CD8-positive, alpha-beta memory T cell (primary cell): ENCODE measurements at regions of chr5 and their contacts with region 1.

Region 1: GRCh38 chr5:138575194-138576015 is at the start of gene HSPA9:
- DNase-seq: peak; percentile 93 to 98 (median 98)
- H3K4me3 ChIP-seq: peak within 1 kb of the TSS; percentile 97
- H3K4me3 Mint-ChIP-seq: peak within 1 kb of the TSS; percentile 86 to 98 (median 98)
- H3K27ac ChIP-seq: peak within 1 kb of the TSS; percentile 100
- H3K27ac Mint-ChIP-seq: peak within 1 kb of the TSS; percentile 100
- H3K4me1 ChIP-seq: peaks cover 29% of the 10 kb centered on the region
- H3K4me1 Mint-ChIP-seq: peaks cover 28 to 50% (median 34%) of the 10 kb centered on the region in 3 donors
- H3K27me3 ChIP-seq: no peaks in the 10 kb centered on the region
- H3K27me3 Mint-ChIP-seq: peaks cover 0 to 5% of the 10 kb centered on the region in 2 donors
- total RNA-seq, gene HSPA9: 468 to 498 TPM

Region 2: GRCh38 chr5:138528208-138528607 is 47.2 kb before region 1 on chr5:
- CTCF ChIA-PET with region 1: no interaction called
- POLR2A ChIA-PET with region 1: no interaction called
- DNase-seq: no peak
- H3K4me3 ChIP-seq: no peak overlapping the region
- H3K4me3 Mint-ChIP-seq: no peak overlapping the region
- H3K27ac ChIP-seq: no peak overlapping the region
- H3K27ac Mint-ChIP-seq: no peak overlapping the region
- H3K4me1 ChIP-seq: peaks cover 5% of the 10 kb centered on the region
- H3K4me1 Mint-ChIP-seq: peaks cover 39 to 66% (median 62%) of the 10 kb centered on the region in 3 donors
- H3K27me3 ChIP-seq: no peaks in the 10 kb centered on the region
- H3K27me3 Mint-ChIP-seq: no peaks in the 10 kb centered on the region

Region 3: GRCh38 chr5:138542956-138543729 is 32.3 kb before region 1 on chr5 and contains the start of gene ETF1:
- CTCF ChIA-PET with region 1: interaction called, 26 read pairs
- POLR2A ChIA-PET with region 1: interaction called, 60 read pairs
- DNase-seq: peak; percentile 99 to 100 (median 100)
- H3K4me3 ChIP-seq: peak within 1 kb of the TSS; percentile 89
- H3K4me3 Mint-ChIP-seq: peak within 1 kb of the TSS; percentile 96 to 100 (median 98)
- H3K27ac ChIP-seq: peak within 1 kb of the TSS; percentile 99
- H3K27ac Mint-ChIP-seq: peak within 1 kb of the TSS; percentile 99 to 100 (median 100)
- H3K4me1 ChIP-seq: peaks cover 75% of the 10 kb centered on the region
- H3K4me1 Mint-ChIP-seq: peaks cover 71 to 94% (median 75%) of the 10 kb centered on the region in 3 donors
- H3K27me3 ChIP-seq: no peaks in the 10 kb centered on the region
- H3K27me3 Mint-ChIP-seq: no peaks in the 10 kb centered on the region
- total RNA-seq, gene ETF1: 239 to 246 TPM

Region 4: GRCh38 chr5:138565100-138565821 is 10.1 kb before region 1 on chr5:
- CTCF ChIA-PET with region 1: interaction called, 18 read pairs
- POLR2A ChIA-PET with region 1: interaction called, 26 read pairs
- DNase-seq: peak; percentile 9 to 88 (median 63)
- H3K4me3 ChIP-seq: peak overlapping the region; percentile 17
- H3K4me3 Mint-ChIP-seq: peak overlapping the region; percentile 19 to 90 (median 80)
- H3K27ac ChIP-seq: peak overlapping the region; percentile 68
- H3K27ac Mint-ChIP-seq: peak overlapping the region; percentile 83 to 100 (median 96)
- H3K4me1 ChIP-seq: peaks cover 32% of the 10 kb centered on the region
- H3K4me1 Mint-ChIP-seq: peaks cover 66 to 84% (median 79%) of the 10 kb centered on the region in 3 donors
- H3K27me3 ChIP-seq: no peaks in the 10 kb centered on the region
- H3K27me3 Mint-ChIP-seq: no peaks in the 10 kb centered on the region

Region 5: DNA sequence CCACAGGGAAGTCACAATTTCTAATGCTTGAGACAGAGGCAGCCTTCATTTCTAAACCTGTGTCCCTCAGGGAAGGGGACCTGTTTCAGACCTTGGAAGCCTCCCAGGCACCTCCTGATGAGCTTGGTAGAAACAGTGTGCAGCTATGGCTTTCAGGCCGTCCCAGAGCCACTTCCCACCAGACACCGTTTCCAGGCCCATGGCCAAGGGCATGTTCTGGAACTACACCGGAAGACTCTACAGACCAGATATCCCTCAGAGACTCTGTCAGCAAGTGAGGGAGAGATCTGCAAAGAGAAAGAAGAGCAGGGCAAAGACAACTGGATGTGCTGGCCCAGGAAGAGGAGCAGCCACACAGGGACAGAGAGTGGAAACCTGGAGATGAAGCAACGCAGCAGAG is 82.0 kb after region 1 on chr5:
- CTCF ChIA-PET with region 1: no interaction called
- POLR2A ChIA-PET with region 1: interaction called, 11 read pairs
- DNase-seq: no peak
- H3K4me3 ChIP-seq: no peak overlapping the region
- H3K4me3 Mint-ChIP-seq: no peak overlapping the region
- H3K27ac ChIP-seq: no peak overlapping the region
- H3K27ac Mint-ChIP-seq: no peak overlapping the region
- H3K4me1 ChIP-seq: peaks cover 19% of the 10 kb centered on the region
- H3K4me1 Mint-ChIP-seq: peaks cover 22 to 26% (median 25%) of the 10 kb centered on the region in 3 donors
- H3K27me3 ChIP-seq: peaks cover 77% of the 10 kb centered on the region
- H3K27me3 Mint-ChIP-seq: peaks cover 68 to 92% of the 10 kb centered on the region in 2 donors

Region 6: DNA sequence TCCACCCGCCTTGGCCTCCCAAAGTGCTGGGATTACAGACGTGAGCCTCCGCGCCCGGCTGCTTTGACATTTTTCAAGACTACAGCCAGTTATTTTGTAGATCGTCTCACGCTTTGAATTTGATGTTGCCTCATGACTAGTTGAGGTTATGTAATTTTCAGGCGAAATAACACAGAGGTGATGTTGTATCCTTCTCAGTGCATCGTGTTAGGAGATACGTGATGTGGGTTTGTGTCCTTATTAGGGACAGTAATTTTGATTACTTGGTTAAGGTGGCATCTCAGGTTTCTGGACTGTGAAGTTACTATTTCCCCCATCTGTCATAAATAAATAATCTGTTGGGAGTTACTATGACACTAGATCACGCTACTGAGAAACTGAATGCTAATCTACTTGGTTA is 202.8 kb after region 1 on chr5:
- CTCF ChIA-PET with region 1: no interaction called
- POLR2A ChIA-PET with region 1: no interaction called
- DNase-seq: no peak
- H3K4me3 ChIP-seq: no peak overlapping the region
- H3K4me3 Mint-ChIP-seq: no peak overlapping the region
- H3K27ac ChIP-seq: no peak overlapping the region
- H3K27ac Mint-ChIP-seq: no peak overlapping the region
- H3K4me1 ChIP-seq: no peaks in the 10 kb centered on the region
- H3K4me1 Mint-ChIP-seq: peaks cover 0 to 3% (median 1%) of the 10 kb centered on the region in 3 donors
- H3K27me3 ChIP-seq: no peaks in the 10 kb centered on the region
- H3K27me3 Mint-ChIP-seq: no peaks in the 10 kb centered on the region

Region 7: GRCh38 chr5:139246394-139246793 is 671.0 kb after region 1 on chr5:
- CTCF ChIA-PET with region 1: no interaction called
- POLR2A ChIA-PET with region 1: no interaction called
- DNase-seq: no peak
- H3K4me3 ChIP-seq: no peak overlapping the region
- H3K4me3 Mint-ChIP-seq: no peak overlapping the region
- H3K27ac ChIP-seq: no peak overlapping the region
- H3K27ac Mint-ChIP-seq: peak overlapping the region in 1 of 8 donors; percentile 56
- H3K4me1 ChIP-seq: no peaks in the 10 kb centered on the region
- H3K4me1 Mint-ChIP-seq: peaks cover 0 to 12% (median 12%) of the 10 kb centered on the region in 3 donors
- H3K27me3 ChIP-seq: no peaks in the 10 kb centered on the region
- H3K27me3 Mint-ChIP-seq: peaks cover 1 to 5% of the 10 kb centered on the region in 2 donors